ENCODE measurements at regions of chr15 and their contacts with region 1.

Region 1: GRCh38 chr15:90529371-90530249 is at the start of gene CRTC3:
- DNase-seq: peak; percentile 83
- ATAC-seq: peak; percentile 85
- H3K4me3 ChIP-seq: peak within 1 kb of the TSS; percentile 41 to 90 (median 67)
- H3K4me3 Mint-ChIP-seq: peak within 1 kb of the TSS; percentile 98
- H3K27ac ChIP-seq: peak within 1 kb of the TSS; percentile 42 to 78
- H3K27ac Mint-ChIP-seq: peak within 1 kb of the TSS; percentile 91
- H3K4me1 ChIP-seq: peaks cover 30 to 42% of the 10 kb centered on the region in 2 donors
- H3K4me1 Mint-ChIP-seq: peaks cover 40% of the 10 kb centered on the region
- H3K27me3 ChIP-seq: no peaks in the 10 kb centered on the region
- H3K27me3 Mint-ChIP-seq: no peaks in the 10 kb centered on the region
- CTCF ChIP-seq: no peak
- total RNA-seq, gene CRTC3: 95.8 and 103 TPM in 2 replicates

Region 2: DNA sequence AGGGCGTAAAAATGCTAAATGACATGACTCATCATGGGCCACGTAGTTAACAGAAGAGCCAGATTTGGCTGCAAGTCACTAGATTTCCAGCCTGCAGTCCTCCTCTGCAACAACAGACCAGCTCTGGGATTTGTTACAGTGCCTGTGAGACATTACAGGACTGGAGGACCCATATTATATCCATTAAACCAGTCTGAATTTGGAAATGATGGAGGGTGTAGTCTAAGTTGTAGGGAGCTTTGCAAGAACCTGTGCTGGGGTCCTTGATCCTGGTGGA is 166.7 kb before region 1 on chr15:
- CTCF ChIA-PET with region 1: no interaction called
- POLR2A ChIA-PET with region 1: no interaction called
- intact Hi-C with region 1: no loop called
- DNase-seq: no peak
- ATAC-seq: no peak
- H3K4me3 ChIP-seq: no peak overlapping the region
- H3K4me3 Mint-ChIP-seq: no peak overlapping the region
- H3K27ac ChIP-seq: no peak overlapping the region
- H3K27ac Mint-ChIP-seq: no peak overlapping the region
- H3K4me1 ChIP-seq: peaks cover 5 to 9% of the 10 kb centered on the region in 2 donors
- H3K4me1 Mint-ChIP-seq: peaks cover 4% of the 10 kb centered on the region
- H3K27me3 ChIP-seq: no peaks in the 10 kb centered on the region
- H3K27me3 Mint-ChIP-seq: no peaks in the 10 kb centered on the region
- CTCF ChIP-seq: no peak

Region 3: GRCh38 chr15:90560229-90560776 is 30.7 kb after region 1 on chr15:
- CTCF ChIA-PET with region 1: interaction called, 6 read pairs
- POLR2A ChIA-PET with region 1: interaction called, 6 read pairs
- intact Hi-C with region 1: loop called (anchors 5 kb)
- DNase-seq: no peak
- ATAC-seq: no peak
- H3K4me3 ChIP-seq: no peak overlapping the region
- H3K4me3 Mint-ChIP-seq: no peak overlapping the region
- H3K27ac ChIP-seq: no peak overlapping the region
- H3K27ac Mint-ChIP-seq: no peak overlapping the region
- H3K4me1 ChIP-seq: peaks cover 65 to 70% of the 10 kb centered on the region in 2 donors
- H3K4me1 Mint-ChIP-seq: peaks cover 74% of the 10 kb centered on the region
- H3K27me3 ChIP-seq: no peaks in the 10 kb centered on the region
- H3K27me3 Mint-ChIP-seq: no peaks in the 10 kb centered on the region
- CTCF ChIP-seq: no peak

Measured in B cell (primary cell).